CD4-positive, alpha-beta memory T cell (primary cell): ENCODE measurements at regions of chrX and their contacts with region 1.

Region 1: DNA sequence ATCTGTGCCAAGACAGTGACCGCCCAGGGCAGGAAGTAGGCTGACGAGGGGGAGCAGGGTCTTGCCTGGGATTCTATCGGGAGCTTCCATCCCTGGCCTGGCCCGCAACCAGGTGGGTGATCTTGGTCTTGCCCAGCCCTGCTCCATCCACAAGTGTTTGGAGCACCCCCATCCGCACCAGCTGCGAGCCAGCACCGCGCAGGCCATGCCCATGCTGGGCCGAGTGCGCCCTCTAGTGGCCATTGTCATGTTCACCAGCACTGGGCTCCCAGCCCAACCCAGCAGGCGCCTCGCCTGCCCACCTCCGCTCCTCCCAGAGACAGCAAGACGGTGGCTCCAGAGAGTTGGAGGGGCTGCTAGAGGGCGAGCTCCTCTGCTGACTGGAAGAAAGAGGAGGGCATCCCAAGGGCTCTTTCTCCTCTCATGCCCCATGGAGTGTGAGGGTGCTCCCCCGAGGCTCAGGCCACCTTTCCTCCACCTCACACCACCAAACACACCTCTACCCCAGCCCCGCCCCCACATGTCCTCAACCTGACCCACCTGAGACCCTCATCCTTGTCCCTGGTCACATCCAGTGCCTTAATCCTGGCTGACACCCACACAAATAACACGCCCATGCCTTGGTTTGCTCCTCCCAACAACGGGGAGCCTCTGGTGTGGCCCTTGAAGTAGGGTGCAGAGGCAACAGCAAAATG is 9.8 kb upstream of the ATP2B3 start:
- DNase-seq: peak; percentile 65 to 77 (median 75)
- H3K4me3 ChIP-seq: no peak overlapping the region
- H3K4me3 Mint-ChIP-seq: no peak overlapping the region
- H3K27ac ChIP-seq: no peak overlapping the region
- H3K27ac Mint-ChIP-seq: peak overlapping the region in 1 of 7 donors; percentile 42
- H3K4me1 ChIP-seq: no peaks in the 10 kb centered on the region
- H3K4me1 Mint-ChIP-seq: peaks cover 0 to 7% (median 3%) of the 10 kb centered on the region in 4 donors
- H3K27me3 ChIP-seq: no peaks in the 10 kb centered on the region
- H3K27me3 Mint-ChIP-seq: no peaks in the 10 kb centered on the region

Region 2: DNA sequence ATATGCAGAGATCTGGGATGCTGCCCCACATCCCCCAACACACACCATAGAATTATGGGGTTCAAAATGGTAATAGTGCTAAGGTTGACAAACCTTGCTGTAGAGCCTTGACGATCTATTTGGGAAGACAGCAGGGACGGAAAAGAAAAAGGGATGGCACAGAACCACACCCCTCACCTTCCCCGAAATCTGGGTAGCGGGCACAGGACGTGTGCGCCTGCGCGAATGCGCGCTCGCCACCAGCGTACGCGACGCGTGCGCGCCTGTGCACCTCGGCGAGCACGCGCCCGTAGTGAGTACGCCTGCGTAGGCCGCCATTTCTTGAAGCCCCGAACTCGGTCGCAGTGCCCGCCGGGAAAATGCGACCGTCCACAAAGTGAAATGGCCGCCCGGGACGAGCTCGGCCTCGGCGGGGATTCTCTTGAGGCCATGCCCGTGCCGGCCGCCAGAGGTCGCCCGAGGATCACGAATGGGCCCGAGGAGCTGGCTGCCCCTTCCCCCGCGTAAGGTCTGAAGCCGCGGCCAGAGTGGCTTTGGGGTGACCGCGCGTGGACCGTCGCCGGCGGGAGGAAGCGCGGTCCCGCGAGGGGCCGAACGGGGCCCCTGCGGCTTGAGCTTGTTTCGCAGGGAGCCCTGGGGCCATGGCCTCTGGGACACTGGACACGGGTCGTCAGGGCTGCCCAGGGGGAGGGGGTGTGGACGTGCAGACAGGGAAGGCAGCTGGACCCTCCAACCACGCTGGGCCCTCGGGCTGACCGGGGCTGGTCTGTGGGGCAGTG is 566.1 kb before region 1 on chrX:
- CTCF ChIA-PET with region 1: interaction called, 25 read pairs
- POLR2A ChIA-PET with region 1: interaction called, 9 read pairs
- intact Hi-C with region 1: loop called (anchors 1 kb)
- DNase-seq: peak; percentile 89 to 92 (median 90)
- H3K4me3 ChIP-seq: peak overlapping the region in 1 of 2 donors; percentile 68
- H3K4me3 Mint-ChIP-seq: peak overlapping the region; percentile 79 to 91 (median 85)
- H3K27ac ChIP-seq: peak overlapping the region; percentile 53
- H3K27ac Mint-ChIP-seq: peak overlapping the region; percentile 85 to 91 (median 89)
- H3K4me1 ChIP-seq: peaks cover 5% of the 10 kb centered on the region
- H3K4me1 Mint-ChIP-seq: peaks cover 4 to 13% (median 7%) of the 10 kb centered on the region in 4 donors
- H3K27me3 ChIP-seq: no peaks in the 10 kb centered on the region
- H3K27me3 Mint-ChIP-seq: no peaks in the 10 kb centered on the region

Region 3: DNA sequence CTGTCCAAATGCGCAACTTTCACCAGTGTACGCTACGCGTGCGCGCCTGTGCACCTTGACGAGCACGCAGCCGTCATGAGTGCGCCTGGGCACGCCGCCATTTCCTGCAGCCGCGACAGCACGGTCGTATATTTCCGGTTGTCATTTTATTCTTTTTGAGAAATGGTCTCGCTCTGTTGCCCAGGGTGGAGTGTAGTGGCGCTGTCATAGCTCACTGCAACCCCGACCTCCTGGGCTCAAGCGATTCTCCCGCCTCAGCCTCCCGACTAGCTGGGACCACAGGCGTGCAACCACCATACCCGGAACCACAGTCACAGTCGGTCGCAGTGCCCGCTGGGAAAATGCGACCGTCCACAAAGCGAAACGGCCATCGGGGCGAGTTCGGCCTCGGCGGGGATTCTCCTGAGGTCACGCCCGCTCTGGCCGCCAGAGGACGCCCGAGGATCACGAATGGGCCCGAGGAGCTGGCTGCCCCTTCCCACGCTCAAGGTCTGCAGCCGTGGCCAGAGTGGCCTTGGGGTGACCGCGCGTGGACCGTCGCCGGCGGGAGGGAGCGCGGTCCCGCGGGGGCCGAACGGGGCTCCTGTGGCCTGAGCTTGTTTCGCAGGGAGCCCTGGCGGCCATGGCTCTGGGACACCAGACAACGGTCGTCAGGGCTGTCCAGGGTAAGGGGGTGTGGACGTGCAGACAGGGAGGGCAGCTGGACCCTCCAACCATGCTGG is 475.1 kb before region 1 on chrX:
- CTCF ChIA-PET with region 1: interaction called, 37 read pairs
- POLR2A ChIA-PET with region 1: interaction called, 12 read pairs
- intact Hi-C with region 1: loop called (anchors 1 kb)
- DNase-seq: peak; percentile 38 to 62 (median 57)
- H3K4me3 ChIP-seq: peak overlapping the region in 1 of 2 donors; percentile 36
- H3K4me3 Mint-ChIP-seq: peak overlapping the region; percentile 83 to 91 (median 86)
- H3K27ac ChIP-seq: peak overlapping the region; percentile 52
- H3K27ac Mint-ChIP-seq: peak overlapping the region; percentile 79 to 94 (median 90)
- H3K4me1 ChIP-seq: peaks cover 9% of the 10 kb centered on the region
- H3K4me1 Mint-ChIP-seq: peaks cover 0 to 24% (median 8%) of the 10 kb centered on the region in 4 donors
- H3K27me3 ChIP-seq: no peaks in the 10 kb centered on the region
- H3K27me3 Mint-ChIP-seq: no peaks in the 10 kb centered on the region

Region 4: DNA sequence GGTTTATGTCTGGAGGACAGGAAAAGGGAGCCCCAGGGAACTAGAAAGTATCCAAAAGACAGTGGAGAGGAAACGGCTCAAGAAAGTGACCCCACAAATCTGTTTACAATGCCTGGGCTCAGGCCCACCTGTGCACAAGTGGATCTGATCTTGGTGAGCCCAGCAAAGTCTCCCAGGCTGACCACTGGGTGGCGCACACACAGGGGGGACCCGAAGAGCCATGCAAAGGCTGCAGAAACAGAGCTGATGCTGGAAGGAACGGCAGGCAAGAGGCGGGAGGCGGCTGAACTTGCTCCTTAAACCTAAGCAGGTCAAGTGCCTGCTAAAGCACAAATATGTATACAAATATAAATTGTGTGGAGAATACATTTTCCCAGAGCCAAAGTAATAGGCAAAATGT is 46.8 kb before region 1 on chrX:
- CTCF ChIA-PET with region 1: interaction called, 36 read pairs
- POLR2A ChIA-PET with region 1: no interaction called
- intact Hi-C with region 1: loop called (anchors 1 kb)
- DNase-seq: peak in 4 of 5 donors; percentile 30 to 47 (median 38)
- H3K4me3 ChIP-seq: no peak overlapping the region
- H3K4me3 Mint-ChIP-seq: no peak overlapping the region
- H3K27ac ChIP-seq: no peak overlapping the region
- H3K27ac Mint-ChIP-seq: no peak overlapping the region
- H3K4me1 ChIP-seq: no peaks in the 10 kb centered on the region
- H3K4me1 Mint-ChIP-seq: peaks cover 0 to 1% (median 0%) of the 10 kb centered on the region in 4 donors
- H3K27me3 ChIP-seq: no peaks in the 10 kb centered on the region
- H3K27me3 Mint-ChIP-seq: no peaks in the 10 kb centered on the region

Region 5: GRCh38 chrX:153491351-153491914 is 16.2 kb before region 1 on chrX:
- CTCF ChIA-PET with region 1: interaction called, 11 read pairs
- POLR2A ChIA-PET with region 1: no interaction called
- intact Hi-C with region 1: no loop called
- DNase-seq: no peak
- H3K4me3 ChIP-seq: no peak overlapping the region
- H3K4me3 Mint-ChIP-seq: no peak overlapping the region
- H3K27ac ChIP-seq: no peak overlapping the region
- H3K27ac Mint-ChIP-seq: no peak overlapping the region
- H3K4me1 ChIP-seq: no peaks in the 10 kb centered on the region
- H3K4me1 Mint-ChIP-seq: no peaks in the 10 kb centered on the region
- H3K27me3 ChIP-seq: no peaks in the 10 kb centered on the region
- H3K27me3 Mint-ChIP-seq: no peaks in the 10 kb centered on the region

Region 6: DNA sequence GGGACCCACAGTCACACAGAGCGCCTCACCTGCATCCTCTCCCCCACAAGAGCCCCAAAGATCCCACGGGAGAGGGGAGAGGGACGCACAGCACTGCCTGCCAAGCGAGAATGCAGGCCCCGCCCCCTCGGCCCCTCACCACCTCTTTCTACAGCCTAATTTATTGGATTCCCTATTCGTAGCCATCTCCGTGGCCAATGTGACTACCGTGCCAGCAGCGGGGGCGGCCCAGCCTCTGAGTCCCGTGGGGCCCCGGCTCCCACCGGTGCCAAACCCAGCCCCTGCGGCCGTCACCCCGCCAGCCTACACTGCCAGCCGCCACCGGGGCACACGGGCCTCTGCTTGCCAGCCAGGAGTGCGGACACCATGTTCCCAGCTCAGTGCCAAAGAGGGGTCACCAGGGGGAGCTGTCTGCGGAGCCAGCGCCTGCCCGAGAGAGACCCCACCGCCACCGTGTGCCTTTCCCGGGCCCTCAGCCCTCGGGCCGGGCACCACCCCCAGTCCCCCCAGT is 236.6 kb after region 1 on chrX:
- CTCF ChIA-PET with region 1: no interaction called
- POLR2A ChIA-PET with region 1: no interaction called
- intact Hi-C with region 1: no loop called
- DNase-seq: peak in 1 of 5 donors; percentile 23
- H3K4me3 ChIP-seq: no peak overlapping the region
- H3K4me3 Mint-ChIP-seq: peak overlapping the region in 1 of 8 donors; percentile 62
- H3K27ac ChIP-seq: no peak overlapping the region
- H3K27ac Mint-ChIP-seq: no peak overlapping the region
- H3K4me1 ChIP-seq: peaks cover 16% of the 10 kb centered on the region
- H3K4me1 Mint-ChIP-seq: peaks cover 6 to 20% (median 12%) of the 10 kb centered on the region in 4 donors
- H3K27me3 ChIP-seq: no peaks in the 10 kb centered on the region
- H3K27me3 Mint-ChIP-seq: peaks cover 0 to 1% of the 10 kb centered on the region in 2 donors